ENCODE measurements at regions of chr17 and their contacts with region 1.

Region 1: DNA sequence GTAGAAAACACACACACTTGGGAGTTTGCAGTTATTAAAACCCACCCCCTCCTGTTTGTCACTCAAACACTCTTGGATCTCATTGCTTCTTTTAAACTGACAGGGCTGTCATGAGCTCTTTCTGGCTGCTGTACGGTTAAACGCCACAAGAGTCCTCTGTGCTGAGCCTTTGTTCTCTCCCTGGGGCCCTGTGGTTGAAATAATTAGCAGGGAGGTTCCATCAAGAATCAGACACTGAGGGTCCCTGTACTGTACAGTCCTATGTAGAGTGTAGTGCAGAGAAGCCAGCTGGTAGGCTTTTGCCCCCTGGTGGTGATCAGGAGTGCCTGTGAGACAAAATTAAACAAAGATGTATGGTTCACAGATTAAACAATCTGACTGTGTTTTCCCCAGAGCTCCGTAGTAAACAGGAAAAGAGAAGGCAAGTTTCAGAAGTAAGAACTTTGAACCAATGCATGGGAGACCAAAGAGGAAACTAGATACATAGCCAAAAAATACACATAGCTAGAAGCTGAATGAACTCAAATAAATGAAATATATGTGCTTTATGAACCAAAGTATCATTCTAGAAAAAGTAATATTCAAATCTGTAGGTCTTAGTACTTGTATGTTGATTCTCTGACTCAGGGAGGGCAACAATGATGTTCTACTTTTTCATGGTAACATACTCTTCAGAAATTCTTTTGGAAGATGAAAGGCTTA is 1.4 kb upstream of the SSH2 start:
- DNase-seq: peak; percentile 84
- ATAC-seq: peak; percentile 80
- H3K4me3 Mint-ChIP-seq: no peak overlapping the region
- H3K27ac Mint-ChIP-seq: no peak overlapping the region
- H3K4me1 Mint-ChIP-seq: peaks cover 16% of the 10 kb centered on the region
- H3K27me3 Mint-ChIP-seq: no peaks in the 10 kb centered on the region

Region 2: DNA sequence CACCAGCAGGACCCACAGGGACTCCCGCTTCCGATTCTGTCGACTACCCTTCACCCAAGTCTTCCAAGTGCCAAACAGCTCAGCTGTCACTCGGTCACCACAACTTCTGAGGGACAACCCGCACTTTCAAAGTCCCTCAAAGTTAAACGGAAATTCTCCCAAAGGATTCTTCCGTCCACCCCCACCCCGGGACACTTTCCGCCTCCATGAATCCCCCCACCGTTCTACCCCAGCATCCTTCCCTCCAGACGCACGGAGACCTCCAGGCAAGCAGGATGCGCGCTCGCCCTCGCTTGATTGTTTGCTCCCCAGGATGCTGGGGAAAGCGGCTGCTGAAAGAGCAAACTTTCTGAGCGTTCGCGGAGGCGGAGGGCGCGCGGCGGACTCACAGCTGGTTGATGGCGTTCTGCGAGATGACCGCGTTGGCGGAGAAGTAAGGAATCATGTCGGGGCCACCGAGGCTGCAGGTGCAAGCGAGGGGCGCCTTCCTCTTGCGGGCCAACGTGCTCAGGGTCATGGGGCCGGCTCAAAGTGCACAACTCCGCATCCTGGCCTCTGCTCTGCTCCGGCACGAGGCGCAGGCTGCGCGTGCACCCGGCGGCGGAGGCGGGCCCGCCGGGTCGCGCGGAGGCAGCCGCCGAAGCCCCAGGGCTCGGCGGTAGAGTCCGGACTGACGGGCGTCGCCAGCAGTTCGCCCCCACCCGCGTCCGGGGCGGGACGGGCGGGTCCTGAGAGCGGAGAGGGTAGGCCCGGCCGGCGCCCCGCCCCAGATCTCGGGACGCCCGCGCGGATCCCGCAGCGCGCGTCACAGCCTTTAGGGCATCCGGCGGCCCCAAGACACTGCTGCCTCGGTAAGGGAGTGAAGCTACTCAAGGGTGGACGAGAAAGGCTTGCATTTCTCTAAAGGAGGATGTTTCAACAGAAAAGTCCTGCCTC is 170.4 kb before region 1 on chr17:
- CTCF ChIA-PET with region 1: interaction called, 4 read pairs
- POLR2A ChIA-PET with region 1: interaction called, 14 read pairs
- DNase-seq: peak; percentile 94
- ATAC-seq: peak; percentile 92
- H3K4me3 Mint-ChIP-seq: peak overlapping the region; percentile 87
- H3K27ac Mint-ChIP-seq: peak overlapping the region; percentile 99
- H3K4me1 Mint-ChIP-seq: peaks cover 44% of the 10 kb centered on the region
- H3K27me3 Mint-ChIP-seq: no peaks in the 10 kb centered on the region

Region 3: GRCh38 chr17:29821897-29822296 is 109.5 kb before region 1 on chr17:
- CTCF ChIA-PET with region 1: interaction called, 24 read pairs
- POLR2A ChIA-PET with region 1: interaction called, 3 read pairs
- DNase-seq: no peak
- ATAC-seq: no peak
- H3K4me3 Mint-ChIP-seq: no peak overlapping the region
- H3K27ac Mint-ChIP-seq: no peak overlapping the region
- H3K4me1 Mint-ChIP-seq: peaks cover 12% of the 10 kb centered on the region
- H3K27me3 Mint-ChIP-seq: no peaks in the 10 kb centered on the region

Region 4: GRCh38 chr17:29838961-29839360 is 92.4 kb before region 1 on chr17:
- CTCF ChIA-PET with region 1: interaction called, 11 read pairs
- POLR2A ChIA-PET with region 1: interaction called, 3 read pairs
- DNase-seq: no peak
- ATAC-seq: no peak
- H3K4me3 Mint-ChIP-seq: no peak overlapping the region
- H3K27ac Mint-ChIP-seq: no peak overlapping the region
- H3K4me1 Mint-ChIP-seq: no peaks in the 10 kb centered on the region
- H3K27me3 Mint-ChIP-seq: no peaks in the 10 kb centered on the region

Region 5: GRCh38 chr17:29909236-29910003 is 22.0 kb before region 1 on chr17:
- CTCF ChIA-PET with region 1: interaction called, 19 read pairs
- POLR2A ChIA-PET with region 1: interaction called, 4 read pairs
- DNase-seq: no peak
- ATAC-seq: no peak
- H3K4me3 Mint-ChIP-seq: no peak overlapping the region
- H3K27ac Mint-ChIP-seq: no peak overlapping the region
- H3K4me1 Mint-ChIP-seq: peaks cover 7% of the 10 kb centered on the region
- H3K27me3 Mint-ChIP-seq: no peaks in the 10 kb centered on the region

Region 6: DNA sequence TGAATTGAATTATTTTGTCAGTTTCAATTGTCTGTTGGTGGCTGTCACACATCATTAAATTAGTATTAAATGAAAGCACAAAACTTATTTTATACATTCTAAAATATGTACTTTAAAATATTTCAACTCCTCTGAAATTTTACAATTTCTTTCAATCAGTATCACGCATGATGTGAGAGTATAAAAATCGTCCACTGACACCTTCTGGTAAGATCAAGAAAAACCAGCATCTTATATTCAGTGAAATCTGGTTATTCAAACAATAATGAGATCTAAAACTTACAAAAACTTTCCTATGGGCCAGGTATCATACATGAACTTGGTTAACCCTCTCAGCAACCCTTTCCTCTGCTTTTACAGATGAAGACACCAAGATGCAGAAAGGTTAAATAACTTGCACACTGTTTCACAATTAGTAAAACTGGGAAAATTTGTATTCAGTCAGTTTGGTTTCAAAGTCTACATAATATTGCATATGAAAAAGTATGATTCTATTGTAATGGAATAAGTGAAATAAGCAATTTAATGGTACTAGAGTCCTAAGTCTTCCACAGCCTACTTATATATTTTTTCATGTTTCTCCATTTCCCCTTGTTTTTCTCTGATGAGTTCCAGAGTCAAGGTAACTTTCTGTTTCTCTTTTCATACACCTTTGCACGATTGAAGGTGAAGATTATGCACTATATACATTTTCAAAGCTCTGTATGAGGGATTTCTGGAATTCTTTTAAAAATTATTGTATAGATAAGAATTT is 68.8 kb after region 1 on chr17:
- CTCF ChIA-PET with region 1: interaction called, 15 read pairs
- POLR2A ChIA-PET with region 1: no interaction called
- DNase-seq: no peak
- ATAC-seq: no peak
- H3K4me3 Mint-ChIP-seq: no peak overlapping the region
- H3K27ac Mint-ChIP-seq: no peak overlapping the region
- H3K4me1 Mint-ChIP-seq: peaks cover 12% of the 10 kb centered on the region
- H3K27me3 Mint-ChIP-seq: peaks cover 4% of the 10 kb centered on the region

Region 7: GRCh38 chr17:30104575-30105339 is 173.4 kb after region 1 on chr17:
- CTCF ChIA-PET with region 1: interaction called, 10 read pairs
- POLR2A ChIA-PET with region 1: no interaction called
- DNase-seq: peak; percentile 82
- ATAC-seq: peak; percentile 98
- H3K4me3 Mint-ChIP-seq: peak overlapping the region; percentile 72
- H3K27ac Mint-ChIP-seq: no peak overlapping the region
- H3K4me1 Mint-ChIP-seq: peaks cover 6% of the 10 kb centered on the region
- H3K27me3 Mint-ChIP-seq: peaks cover 24% of the 10 kb centered on the region

Region 8: DNA sequence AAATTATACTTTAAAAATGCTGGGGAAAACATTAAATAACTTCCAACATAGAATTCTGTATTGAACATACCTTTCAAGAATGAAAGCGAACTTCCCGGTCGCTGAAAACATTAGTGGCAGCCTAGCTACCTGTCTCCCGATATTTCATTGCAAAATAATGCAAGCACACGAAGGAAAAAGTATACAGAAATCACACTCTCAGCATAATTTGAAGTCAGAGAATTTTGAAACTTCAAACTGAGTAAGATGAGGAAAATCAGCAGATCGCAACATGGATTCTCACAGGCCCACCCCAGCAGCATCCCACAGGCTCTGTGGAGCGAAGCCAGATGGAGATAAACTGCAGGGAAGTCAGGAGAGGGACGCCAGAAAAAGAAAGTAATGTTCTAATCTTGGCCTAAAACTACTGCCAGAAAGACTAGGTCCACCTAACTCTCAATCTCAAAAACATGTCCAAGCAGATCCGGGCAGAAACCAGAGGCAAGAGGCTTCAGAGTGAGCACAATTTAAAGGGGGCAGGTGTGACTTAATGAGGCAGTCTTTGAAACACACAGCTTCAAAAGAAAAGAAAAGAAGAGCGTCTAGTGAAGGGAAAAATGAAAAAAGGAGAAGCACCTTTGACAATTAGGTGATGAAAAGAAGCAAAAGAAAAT is 541.0 kb after region 1 on chr17:
- CTCF ChIA-PET with region 1: no interaction called
- POLR2A ChIA-PET with region 1: no interaction called
- DNase-seq: no peak
- ATAC-seq: no peak
- H3K4me3 Mint-ChIP-seq: no peak overlapping the region
- H3K27ac Mint-ChIP-seq: no peak overlapping the region
- H3K4me1 Mint-ChIP-seq: peaks cover 15% of the 10 kb centered on the region
- H3K27me3 Mint-ChIP-seq: peaks cover 6% of the 10 kb centered on the region